Transverse colon (tissue), 4 donors: ENCODE measurements at regions of chr5 and their contacts with region 1.

Region 1: DNA sequence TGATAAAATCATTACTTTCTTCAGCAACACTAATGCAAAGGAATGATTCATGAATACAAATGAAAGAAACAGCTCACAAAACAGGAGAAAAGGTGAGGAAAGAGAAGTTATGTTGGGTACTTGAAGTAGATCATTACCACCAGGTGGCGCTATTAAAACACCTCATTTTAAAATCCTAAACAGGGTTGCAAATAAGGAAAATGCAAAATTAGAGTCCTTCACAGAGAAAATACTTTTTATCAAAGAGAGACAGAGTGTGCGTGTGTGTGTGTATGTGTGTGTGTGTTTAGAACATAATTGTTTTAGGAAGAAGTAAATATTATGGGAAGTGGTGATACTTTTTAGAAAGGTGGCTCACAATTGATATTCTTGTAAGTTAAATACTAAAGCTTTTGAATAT is 49.5 kb upstream of the CD180 start:
- DNase-seq: no peak
- H3K4me3 ChIP-seq: no peak overlapping the region
- H3K27ac ChIP-seq: peak overlapping the region; percentile 3 to 45 (median 22)
- H3K4me1 ChIP-seq: peaks cover 0 to 18% (median 13%) of the 10 kb centered on the region in 4 donors
- H3K27me3 ChIP-seq: no peaks in the 10 kb centered on the region
- CTCF ChIP-seq: peak; percentile 75 to 88 (median 81)
- EP300 ChIP-seq: no peak
- POLR2A ChIP-seq: no peak

Region 2: DNA sequence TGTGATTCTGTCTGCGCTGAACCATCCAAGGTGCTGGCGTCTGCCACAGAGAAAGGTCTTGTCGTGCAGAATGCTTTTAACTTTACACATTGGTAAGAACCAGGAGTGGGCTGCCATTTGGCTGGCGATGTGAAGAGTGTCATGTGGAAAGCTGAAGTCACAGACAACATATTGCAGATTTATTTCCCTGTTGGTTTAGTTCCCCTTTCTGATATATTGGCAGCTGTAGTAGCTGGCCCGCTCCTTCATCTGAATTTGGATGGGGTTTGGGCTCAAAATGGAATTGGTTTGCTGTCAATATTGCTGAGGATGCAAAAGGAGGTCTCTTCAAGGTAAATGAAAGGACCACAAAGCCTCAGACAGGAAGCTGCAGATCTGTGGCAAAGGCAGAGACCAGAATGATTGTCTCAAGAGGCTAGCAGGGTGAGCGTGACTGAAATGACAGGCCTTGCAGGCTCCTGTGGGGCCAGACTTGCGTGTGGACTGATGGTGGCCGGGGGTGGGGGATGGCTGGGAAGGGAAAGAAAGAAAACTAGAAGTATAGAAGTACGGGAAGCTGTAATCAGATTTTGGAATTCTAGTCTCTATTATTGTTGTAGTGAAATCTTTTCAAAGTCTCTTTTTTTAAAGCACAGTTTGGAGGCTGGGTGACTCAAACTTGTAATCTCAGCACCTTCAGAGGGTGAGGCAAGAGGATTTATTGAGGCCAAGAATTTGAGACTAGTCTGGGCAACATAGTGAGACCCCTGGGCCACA is 24.4 kb before region 1 on chr5:
- in situ Hi-C with region 1: no loop called
- intact Hi-C with region 1: no loop called
- DNase-seq: peak; percentile 19
- H3K4me3 ChIP-seq: no peak overlapping the region
- H3K27ac ChIP-seq: peak overlapping the region; percentile 0 to 39 (median 22)
- H3K4me1 ChIP-seq: peaks cover 0 to 7% (median 2%) of the 10 kb centered on the region in 4 donors
- H3K27me3 ChIP-seq: no peaks in the 10 kb centered on the region
- CTCF ChIP-seq: no peak
- EP300 ChIP-seq: no peak
- POLR2A ChIP-seq: no peak

Region 3: DNA sequence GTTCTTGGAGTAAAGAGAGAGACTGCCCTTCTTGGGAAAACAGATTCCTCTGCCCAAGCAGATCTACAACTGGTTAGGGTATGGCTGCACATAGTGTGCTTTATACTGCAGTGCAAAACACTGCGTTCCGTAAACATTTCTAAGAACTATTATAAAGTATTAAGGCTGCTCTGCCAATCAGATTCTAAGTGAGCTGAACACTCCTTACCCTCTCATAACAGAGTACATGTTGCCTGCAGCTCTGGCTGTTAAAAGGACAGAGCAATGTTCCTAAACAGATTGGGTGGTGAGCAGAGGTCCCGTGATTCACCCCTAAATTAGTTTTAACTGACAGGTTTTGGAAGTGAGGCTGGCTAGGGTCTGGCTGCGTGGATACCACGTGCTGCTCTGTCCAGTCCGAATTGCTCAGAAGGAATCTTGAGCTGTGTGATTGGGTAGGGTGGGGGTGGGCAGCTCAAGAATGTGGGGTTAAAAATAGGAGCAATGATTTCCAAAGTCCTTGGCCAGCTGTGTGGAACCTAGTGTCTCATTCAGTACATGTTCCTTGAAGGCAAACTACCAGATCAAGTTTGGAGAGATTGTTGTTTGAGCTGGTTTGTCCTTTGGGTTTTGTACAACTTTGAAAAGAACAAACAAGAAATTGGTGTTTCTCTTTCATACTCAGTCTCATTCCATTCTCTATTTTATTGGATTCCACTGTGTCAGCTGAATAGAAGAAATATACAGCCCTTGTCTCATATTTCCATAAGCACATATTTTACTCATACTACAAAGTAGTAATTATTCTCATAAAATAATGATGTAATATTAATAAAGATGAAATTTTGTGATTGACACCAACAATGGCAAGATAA is 448.1 kb after region 1 on chr5:
- in situ Hi-C with region 1: no loop called
- intact Hi-C with region 1: loop called (anchors 10 kb)
- DNase-seq: peak; percentile 56
- H3K4me3 ChIP-seq: no peak overlapping the region
- H3K27ac ChIP-seq: peak overlapping the region; percentile 69 to 80 (median 74)
- H3K4me1 ChIP-seq: peaks cover 0 to 19% (median 10%) of the 10 kb centered on the region in 4 donors
- H3K27me3 ChIP-seq: no peaks in the 10 kb centered on the region
- CTCF ChIP-seq: no peak
- EP300 ChIP-seq: peak; percentile 98
- POLR2A ChIP-seq: no peak

Region 4: DNA sequence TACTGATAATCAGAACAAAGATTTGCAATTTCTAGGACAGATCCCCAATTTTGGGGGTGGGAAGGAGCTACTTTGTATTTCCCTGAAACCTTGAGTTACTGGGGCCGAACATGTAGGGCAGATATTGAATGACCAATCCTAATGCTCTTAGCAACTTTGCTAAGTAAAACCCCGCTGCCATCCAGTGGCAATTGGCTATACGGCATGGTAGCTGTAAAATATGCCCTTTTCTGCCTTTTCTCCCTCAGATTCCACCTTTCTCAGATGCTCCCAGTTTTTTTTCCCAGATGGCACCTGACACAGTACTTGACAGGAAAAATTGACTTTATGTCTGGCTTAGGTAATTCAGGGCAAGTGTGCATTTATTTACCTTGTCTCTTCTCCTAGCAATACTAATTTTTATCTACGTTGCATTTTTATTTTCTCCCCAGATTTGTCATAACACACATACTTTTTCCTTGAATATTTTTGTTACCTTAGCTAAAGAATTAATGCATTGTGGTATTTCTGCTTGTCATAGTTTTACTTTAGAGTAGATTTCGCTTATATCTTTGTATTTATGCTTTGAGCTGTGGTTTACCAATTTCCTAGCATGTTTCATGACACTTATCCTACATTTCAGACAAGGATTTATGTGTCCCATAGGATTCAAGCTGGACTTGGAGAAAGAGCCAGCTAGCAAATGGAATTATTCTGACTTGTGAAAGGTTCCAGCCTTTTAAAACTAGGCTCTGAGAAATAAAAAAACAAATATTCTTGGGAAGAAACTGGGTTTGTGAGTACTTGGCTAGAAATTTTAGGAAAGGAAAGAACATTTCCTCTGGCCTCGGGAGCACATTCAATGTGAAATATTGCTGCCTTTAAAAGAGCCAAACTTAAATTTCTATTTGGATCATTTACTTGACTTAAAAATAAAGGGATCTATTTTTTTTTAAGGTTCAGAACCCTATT is 1006.8 kb after region 1 on chr5:
- in situ Hi-C with region 1: loop called in 3 of 4 experiments (anchors 5 to 25 kb)
- intact Hi-C with region 1: loop called (anchors 10 kb)
- DNase-seq: peak; percentile 60
- H3K4me3 ChIP-seq: no peak overlapping the region
- H3K27ac ChIP-seq: peak overlapping the region; percentile 65 to 77 (median 71)
- H3K4me1 ChIP-seq: peaks cover 34 to 97% (median 77%) of the 10 kb centered on the region in 4 donors
- H3K27me3 ChIP-seq: no peaks in the 10 kb centered on the region
- CTCF ChIP-seq: peak; percentile 57 to 84 (median 67)
- EP300 ChIP-seq: no peak
- POLR2A ChIP-seq: no peak

Region 5: GRCh38 chr5:68460147-68460798 is 1214.2 kb after region 1 on chr5:
- in situ Hi-C with region 1: loop called in 2 of 4 experiments (anchors 25 kb)
- intact Hi-C with region 1: no loop called
- DNase-seq: peak; percentile 26
- H3K4me3 ChIP-seq: no peak overlapping the region
- H3K27ac ChIP-seq: no peak overlapping the region
- H3K4me1 ChIP-seq: peaks cover 0 to 19% (median 3%) of the 10 kb centered on the region in 4 donors
- H3K27me3 ChIP-seq: no peaks in the 10 kb centered on the region
- CTCF ChIP-seq: peak; percentile 63 to 73 (median 69)
- EP300 ChIP-seq: no peak
- POLR2A ChIP-seq: no peak

Region 6: DNA sequence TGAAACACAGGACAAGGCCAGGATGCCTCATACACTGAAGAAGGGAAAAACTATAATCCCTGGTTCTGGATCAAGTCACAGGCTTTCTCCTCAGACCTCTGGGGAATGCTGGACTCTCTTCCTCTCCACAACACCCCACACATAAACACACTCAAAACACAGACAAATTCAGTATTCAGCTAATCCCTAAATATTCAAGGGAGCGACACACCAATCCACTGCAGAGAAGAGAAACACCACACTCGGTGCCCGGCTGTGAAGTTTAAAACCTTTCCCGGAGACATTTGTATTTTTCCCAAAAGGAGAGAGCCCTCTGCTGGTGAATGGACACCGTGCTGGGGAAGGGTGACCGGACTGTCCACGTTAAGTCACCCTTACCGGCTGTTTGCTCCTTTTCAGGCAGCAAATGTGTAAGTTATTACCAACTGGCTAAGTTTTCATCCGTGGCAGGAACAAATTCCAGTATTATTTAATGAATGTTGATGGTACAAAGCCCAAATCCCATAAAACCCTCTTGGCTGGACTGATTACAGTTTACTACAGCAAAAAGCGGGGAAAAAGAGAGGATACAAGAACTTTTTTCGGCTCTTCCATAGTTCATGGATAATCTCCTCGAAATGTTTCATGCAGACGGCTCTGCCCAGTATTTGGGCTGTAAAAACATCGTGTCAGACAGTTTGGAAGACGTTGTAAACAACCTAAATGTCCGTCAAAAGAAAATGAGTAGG is 1716.8 kb after region 1 on chr5:
- in situ Hi-C with region 1: loop called in 1 of 4 experiments (anchors 25 kb)
- intact Hi-C with region 1: no loop called
- DNase-seq: peak; percentile 63
- H3K4me3 ChIP-seq: no peak overlapping the region
- H3K27ac ChIP-seq: peak overlapping the region in 1 of 4 donors; percentile 53
- H3K4me1 ChIP-seq: peaks cover 3 to 21% (median 8%) of the 10 kb centered on the region in 4 donors
- H3K27me3 ChIP-seq: no peaks in the 10 kb centered on the region
- CTCF ChIP-seq: peak; percentile 69 to 83 (median 80)
- EP300 ChIP-seq: no peak
- POLR2A ChIP-seq: no peak